Activated B cell treated with CpG ODN at 0.5 μM for 24 hours (primary cell): ENCODE measurements at regions of chr3 and their contacts with region 1.

Region 1: GRCh38 chr3:185308126-185308754 is 54.4 kb upstream of the EHHADH start:
- DNase-seq: no peak
- ATAC-seq: peak; percentile 61
- H3K4me3 Mint-ChIP-seq: no peak overlapping the region
- H3K27ac Mint-ChIP-seq: no peak overlapping the region
- H3K4me1 Mint-ChIP-seq: no peaks in the 10 kb centered on the region
- H3K27me3 Mint-ChIP-seq: no peaks in the 10 kb centered on the region
- CTCF ChIP-seq: peak; percentile 28

Region 2: DNA sequence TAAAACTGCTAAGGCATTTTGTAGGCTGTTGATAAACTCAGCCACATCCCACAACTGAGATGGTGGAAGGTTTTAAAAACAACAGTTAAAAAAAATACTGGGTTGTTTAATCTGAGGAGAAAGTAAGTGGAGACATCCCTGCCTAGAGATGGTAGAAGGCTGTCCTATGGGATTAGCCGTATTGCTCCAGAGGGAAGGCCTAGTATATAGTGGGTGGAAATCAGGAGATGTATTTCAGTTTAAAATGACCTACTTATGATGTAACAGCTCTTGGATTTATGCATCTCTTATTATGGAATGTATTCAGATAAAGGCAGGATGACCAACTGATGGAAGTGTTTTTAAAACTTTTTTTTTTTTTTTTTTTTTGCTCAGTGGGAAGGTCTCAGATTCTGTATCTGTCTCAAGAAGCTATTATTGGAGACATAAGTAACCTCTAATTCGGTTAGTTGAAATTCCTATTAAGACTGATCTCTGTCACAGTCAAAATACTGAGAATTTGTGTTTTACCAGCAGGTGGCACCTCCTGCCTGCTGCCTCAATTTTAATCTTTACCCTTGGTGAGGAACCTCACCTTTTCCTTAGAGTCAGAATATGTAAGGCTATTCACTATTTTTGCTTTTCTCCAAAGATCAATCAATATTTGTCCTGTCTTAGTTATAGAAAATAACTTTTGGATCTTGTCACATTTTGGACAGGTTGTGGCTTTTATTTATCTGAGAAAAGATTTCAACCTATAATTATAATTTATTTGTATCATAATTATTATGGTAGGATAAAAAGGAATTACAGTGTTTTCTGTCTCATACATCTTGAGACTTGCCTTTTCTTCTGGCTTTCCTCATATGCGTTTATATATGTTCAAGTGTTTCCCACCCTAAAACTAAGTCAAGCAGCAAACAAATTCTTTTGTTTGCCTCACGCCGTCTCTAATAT is 433.3 kb before region 1 on chr3:
- CTCF ChIA-PET with region 1: interaction called, 19 read pairs
- POLR2A ChIA-PET with region 1: no interaction called
- intact Hi-C with region 1: no loop called
- DNase-seq: no peak
- ATAC-seq: no peak
- H3K4me3 Mint-ChIP-seq: no peak overlapping the region
- H3K27ac Mint-ChIP-seq: no peak overlapping the region
- H3K4me1 Mint-ChIP-seq: no peaks in the 10 kb centered on the region
- H3K27me3 Mint-ChIP-seq: no peaks in the 10 kb centered on the region
- CTCF ChIP-seq: peak; percentile 28

Region 3: DNA sequence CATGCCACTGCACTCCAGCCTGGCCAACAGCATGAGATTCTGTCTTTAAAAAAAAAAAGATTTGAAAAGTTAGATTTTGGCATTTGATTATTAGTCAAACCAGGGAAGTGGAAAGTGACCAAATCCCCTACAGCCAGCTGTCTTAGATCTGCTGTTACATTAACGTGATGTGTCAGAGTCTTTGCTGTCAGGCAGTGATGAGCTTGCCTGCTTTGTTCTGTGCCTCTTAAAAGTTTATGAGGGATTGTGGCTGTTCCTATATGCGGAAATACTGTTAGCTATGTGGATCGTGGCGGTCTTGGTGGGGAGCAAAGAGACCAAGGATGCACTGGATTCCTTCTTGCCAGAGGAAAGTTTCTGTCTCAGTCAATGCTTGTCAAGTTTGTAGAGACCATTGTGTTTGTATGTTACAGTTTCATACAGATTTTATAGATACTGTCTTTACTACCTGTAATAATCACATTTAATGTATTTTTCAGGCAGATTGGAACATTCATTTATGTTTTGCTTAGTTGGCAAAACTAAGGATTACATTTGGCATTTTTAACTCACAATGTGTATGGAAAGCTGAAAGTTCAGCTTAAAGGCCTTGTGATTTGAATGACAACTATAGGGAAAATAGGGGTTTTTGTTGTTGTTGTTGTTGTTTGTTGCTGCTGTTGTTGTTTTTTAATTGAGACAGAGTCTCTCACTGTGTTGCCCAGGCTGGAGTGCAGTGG is 358.8 kb before region 1 on chr3:
- CTCF ChIA-PET with region 1: no interaction called
- POLR2A ChIA-PET with region 1: no interaction called
- intact Hi-C with region 1: loop called (anchors 5 kb)
- DNase-seq: no peak
- ATAC-seq: no peak
- H3K4me3 Mint-ChIP-seq: no peak overlapping the region
- H3K27ac Mint-ChIP-seq: no peak overlapping the region
- H3K4me1 Mint-ChIP-seq: no peaks in the 10 kb centered on the region
- H3K27me3 Mint-ChIP-seq: no peaks in the 10 kb centered on the region
- CTCF ChIP-seq: no peak

Region 4: GRCh38 chr3:184964880-184965279 is 343.4 kb before region 1 on chr3:
- CTCF ChIA-PET with region 1: no interaction called
- POLR2A ChIA-PET with region 1: no interaction called
- intact Hi-C with region 1: loop called (anchors 5 kb)
- DNase-seq: no peak
- ATAC-seq: no peak
- H3K4me3 Mint-ChIP-seq: no peak overlapping the region
- H3K27ac Mint-ChIP-seq: no peak overlapping the region
- H3K4me1 Mint-ChIP-seq: peaks cover 2% of the 10 kb centered on the region
- H3K27me3 Mint-ChIP-seq: no peaks in the 10 kb centered on the region
- CTCF ChIP-seq: no peak

Region 5: DNA sequence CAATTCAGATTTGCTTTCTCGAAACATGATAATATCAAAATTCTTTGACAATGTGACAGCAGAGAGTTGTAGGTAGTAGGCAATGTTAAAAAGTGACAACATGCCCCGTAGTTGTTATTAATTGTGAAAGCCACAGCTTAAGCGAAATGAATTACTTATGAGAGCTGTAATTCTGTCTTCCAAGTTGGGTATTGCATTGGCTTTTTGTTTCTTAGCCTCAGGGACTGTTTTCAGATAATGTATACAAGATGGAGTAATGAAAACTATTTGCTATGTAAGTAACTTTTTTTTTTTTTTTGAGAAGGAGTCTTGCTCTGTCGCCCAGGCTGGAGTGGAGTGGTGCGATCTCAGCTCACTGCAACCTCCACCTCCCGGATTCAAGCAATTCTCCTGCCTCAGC is 11.6 kb after region 1 on chr3:
- CTCF ChIA-PET with region 1: no interaction called
- POLR2A ChIA-PET with region 1: no interaction called
- intact Hi-C with region 1: no loop called
- DNase-seq: no peak
- ATAC-seq: no peak
- H3K4me3 Mint-ChIP-seq: no peak overlapping the region
- H3K27ac Mint-ChIP-seq: no peak overlapping the region
- H3K4me1 Mint-ChIP-seq: no peaks in the 10 kb centered on the region
- H3K27me3 Mint-ChIP-seq: peaks cover 2% of the 10 kb centered on the region
- CTCF ChIP-seq: no peak

Region 6: GRCh38 chr3:185371306-185372074 is 63.2 kb after region 1 on chr3:
- CTCF ChIA-PET with region 1: no interaction called
- POLR2A ChIA-PET with region 1: no interaction called
- intact Hi-C with region 1: no loop called
- DNase-seq: no peak
- ATAC-seq: no peak
- H3K4me3 Mint-ChIP-seq: no peak overlapping the region
- H3K27ac Mint-ChIP-seq: no peak overlapping the region
- H3K4me1 Mint-ChIP-seq: no peaks in the 10 kb centered on the region
- H3K27me3 Mint-ChIP-seq: peaks cover 8% of the 10 kb centered on the region
- CTCF ChIP-seq: no peak